ENCODE measurements at regions of chr11 and their contacts with region 1.

Region 1: DNA sequence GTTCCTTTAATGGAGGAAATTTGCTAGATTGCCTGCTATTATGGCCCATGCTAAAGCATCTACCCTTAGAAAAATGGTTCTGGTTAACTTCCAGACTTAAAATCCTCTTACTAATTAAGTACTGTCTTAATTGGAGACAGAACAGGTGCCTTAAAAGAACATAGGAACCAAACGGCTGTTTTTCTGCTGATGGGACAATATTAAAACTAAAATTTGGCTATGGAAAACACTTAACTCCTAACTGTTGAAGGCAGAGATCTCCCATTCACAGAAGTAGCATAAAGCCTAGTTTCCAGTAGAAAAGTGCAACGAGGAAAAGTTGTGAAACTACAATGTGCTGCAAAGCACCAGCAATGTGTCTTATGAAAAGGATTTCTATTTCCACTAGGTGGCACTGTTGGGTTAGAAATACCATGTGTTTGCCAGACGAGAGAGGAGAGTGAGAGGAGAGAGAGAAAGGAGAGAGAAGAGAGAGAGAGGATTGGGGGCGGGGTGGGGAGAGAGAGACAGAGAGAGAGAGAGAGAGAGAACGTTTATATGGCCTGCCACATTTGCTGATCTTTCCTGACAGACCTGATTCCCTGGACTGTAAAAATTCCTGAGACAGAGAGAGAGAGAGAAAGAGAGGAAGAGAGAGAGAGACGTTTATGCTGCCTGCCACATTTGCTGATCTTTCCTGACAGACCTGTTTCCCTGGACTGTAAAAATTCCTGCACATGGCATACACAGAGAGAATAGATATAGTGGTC is 51.5 kb downstream of the FAM181B start:
- DNase-seq: peak; percentile 61
- H3K4me3 ChIP-seq: no peak overlapping the region
- H3K27ac ChIP-seq: no peak overlapping the region
- H3K4me1 ChIP-seq: no peaks in the 10 kb centered on the region
- H3K27me3 ChIP-seq: peaks cover 2 to 8% of the 10 kb centered on the region in 2 experiments
- CTCF ChIP-seq: peak; percentile 35 to 43
- POLR2A ChIP-seq: no peak

Region 2: GRCh38 chr11:82671451-82671850 is 10.7 kb before region 1 on chr11:
- CTCF ChIA-PET with region 1: no interaction called
- POLR2A ChIA-PET with region 1: no interaction called
- dilution Hi-C with region 1: no loop called
- intact Hi-C with region 1: no loop called
- DNase-seq: no peak
- H3K4me3 ChIP-seq: no peak overlapping the region
- H3K27ac ChIP-seq: no peak overlapping the region
- H3K4me1 ChIP-seq: no peaks in the 10 kb centered on the region
- H3K27me3 ChIP-seq: no peaks in the 10 kb centered on the region
- CTCF ChIP-seq: no peak
- POLR2A ChIP-seq: no peak

Region 3: DNA sequence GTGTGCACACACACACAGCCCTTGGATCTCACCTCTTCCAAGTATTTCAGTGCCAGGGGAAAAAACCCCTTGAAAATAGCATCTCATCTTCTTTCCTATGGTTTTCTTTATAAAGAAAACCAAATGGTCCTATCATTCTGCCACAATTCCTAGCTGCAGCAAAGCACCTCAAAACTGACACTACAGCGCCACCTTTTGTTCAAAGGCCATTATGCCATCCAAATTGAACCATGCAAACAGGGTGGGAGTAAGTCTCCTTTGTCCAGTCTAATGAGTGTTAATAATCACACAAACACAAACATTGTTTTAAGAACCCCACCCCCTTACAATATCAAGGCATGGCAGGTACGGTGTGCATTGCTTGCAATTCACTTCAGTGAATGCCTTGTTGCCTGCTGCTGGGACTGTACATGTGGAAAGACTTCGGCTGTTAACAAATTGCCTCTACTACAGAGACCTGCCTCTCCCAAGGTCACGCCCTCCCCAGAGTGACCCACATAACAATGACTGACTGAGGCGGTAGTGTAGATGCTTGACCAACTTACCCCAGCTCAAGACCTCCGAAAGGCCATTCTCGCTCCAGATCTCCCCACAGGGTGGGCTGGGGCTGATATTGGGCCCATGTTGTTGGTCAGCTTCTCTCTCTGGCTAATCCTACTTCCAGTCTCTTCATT is 19.8 kb after region 1 on chr11:
- CTCF ChIA-PET with region 1: interaction called, 14 read pairs
- POLR2A ChIA-PET with region 1: no interaction called
- dilution Hi-C with region 1: no loop called
- intact Hi-C with region 1: loop called (anchors 2 kb)
- DNase-seq: peak; percentile 50
- H3K4me3 ChIP-seq: no peak overlapping the region
- H3K27ac ChIP-seq: no peak overlapping the region
- H3K4me1 ChIP-seq: no peaks in the 10 kb centered on the region
- H3K27me3 ChIP-seq: peaks cover 4 to 6% of the 10 kb centered on the region in 2 experiments
- CTCF ChIP-seq: peak; percentile 61 to 62
- POLR2A ChIP-seq: no peak

Region 4: DNA sequence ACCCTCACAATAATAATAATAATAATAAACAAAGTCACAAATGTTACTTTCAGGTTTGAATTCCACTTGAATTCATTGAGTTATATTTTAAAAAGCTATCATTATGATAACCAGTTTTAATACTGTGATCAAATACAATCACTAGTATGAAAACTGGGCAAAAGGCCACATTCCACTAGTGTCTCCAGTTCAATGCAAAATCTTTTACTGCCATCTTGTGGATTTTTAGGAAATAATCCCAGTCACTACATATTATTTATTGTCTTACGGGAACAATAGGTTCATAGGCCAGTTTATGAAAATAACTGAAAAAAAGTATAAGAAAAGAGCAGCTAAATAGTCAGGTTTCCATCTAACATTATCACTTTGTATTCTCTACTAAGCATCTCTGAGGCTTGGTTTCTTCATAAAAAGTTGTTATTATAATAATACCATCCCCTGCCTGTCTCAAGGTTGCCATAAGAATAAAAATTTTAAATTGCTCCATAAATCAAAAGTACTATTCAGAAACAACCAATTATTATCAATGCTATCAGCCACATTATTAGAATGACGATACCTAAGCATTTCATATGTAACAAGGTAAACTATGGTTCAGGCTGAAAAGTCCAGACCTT is 1137.9 kb after region 1 on chr11:
- CTCF ChIA-PET with region 1: interaction called, 8 read pairs
- POLR2A ChIA-PET with region 1: no interaction called
- dilution Hi-C with region 1: no loop called
- intact Hi-C with region 1: loop called (anchors 1 kb)
- DNase-seq: peak; percentile 65
- H3K4me3 ChIP-seq: no peak overlapping the region
- H3K27ac ChIP-seq: no peak overlapping the region
- H3K4me1 ChIP-seq: no peaks in the 10 kb centered on the region
- H3K27me3 ChIP-seq: peaks cover 0 to 2% of the 10 kb centered on the region in 2 experiments
- CTCF ChIP-seq: peak; percentile 18 to 23
- POLR2A ChIP-seq: no peak

Measured in endothelial cell of umbilical vein (primary cell).